Colonic mucosa (tissue), 4 donors: ENCODE measurements at regions of chr10 and their contacts with region 1.

Region 1: GRCh38 chr10:61744469-61744868 is 81.7 kb downstream of the CABCOCO1 start:
- DNase-seq: peak; percentile 35
- H3K4me3 ChIP-seq: no peak overlapping the region
- H3K27ac ChIP-seq: no peak overlapping the region
- H3K4me1 ChIP-seq: no peaks in the 10 kb centered on the region
- H3K27me3 ChIP-seq: no peaks in the 10 kb centered on the region
- CTCF ChIP-seq: no peak

Region 2: GRCh38 chr10:61140765-61141392 is 603.6 kb before region 1 on chr10:
- intact Hi-C with region 1: loop called (anchors 10 kb)
- DNase-seq: no peak
- H3K4me3 ChIP-seq: no peak overlapping the region
- H3K27ac ChIP-seq: no peak overlapping the region
- H3K4me1 ChIP-seq: no peaks in the 10 kb centered on the region
- H3K27me3 ChIP-seq: no peaks in the 10 kb centered on the region
- CTCF ChIP-seq: peak; percentile 47